ENCODE measurements at regions of chr6 and their contacts with region 1.

Region 1: GRCh38 chr6:25278914-25279747 is at the start of gene CARMIL1:
- DNase-seq: peak; percentile 80
- ATAC-seq: peak; percentile 90
- H3K4me3 Mint-ChIP-seq: peak within 1 kb of the TSS; percentile 76
- H3K27ac Mint-ChIP-seq: peak within 1 kb of the TSS; percentile 62
- H3K4me1 Mint-ChIP-seq: peaks cover 20% of the 10 kb centered on the region
- H3K27me3 Mint-ChIP-seq: peaks cover 18% of the 10 kb centered on the region
- total RNA-seq, gene CARMIL1: 3.4 to 3.8 TPM

Region 2: DNA sequence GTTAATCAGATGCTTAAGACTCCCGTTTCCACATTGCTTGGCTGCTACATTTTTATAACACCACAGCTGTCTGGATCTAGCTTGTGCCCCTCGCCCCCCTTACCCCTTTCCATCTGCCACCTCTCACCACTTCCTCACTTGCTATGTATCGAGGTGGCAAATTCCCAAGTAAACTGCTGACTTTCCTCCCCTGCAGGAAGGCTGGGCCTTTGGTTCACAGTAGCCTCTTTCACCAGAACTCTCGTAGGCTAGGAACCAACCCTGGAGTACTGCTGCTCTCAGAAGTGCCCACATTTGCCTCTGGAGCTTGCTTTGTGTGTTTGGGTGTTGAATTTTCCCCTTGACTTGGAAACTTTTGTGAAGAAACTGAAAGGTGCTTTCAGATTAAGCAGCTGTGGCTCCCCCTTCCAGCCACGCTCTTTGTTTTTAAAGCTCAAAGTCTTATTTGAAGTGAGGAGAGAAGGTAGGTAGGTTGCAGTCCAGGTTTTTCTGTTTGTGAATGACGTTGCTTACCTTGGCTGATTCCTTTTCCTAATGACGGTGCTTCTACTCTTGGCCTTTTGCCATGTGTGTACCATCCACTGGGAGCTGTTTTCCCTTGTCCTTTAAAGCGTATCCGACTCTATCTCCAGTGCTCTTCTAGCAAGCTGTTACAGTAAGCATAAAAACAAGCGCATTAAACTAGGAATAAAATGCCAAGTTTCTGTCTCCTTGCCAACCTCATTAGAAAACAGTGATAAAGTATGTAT is 90.5 kb after region 1 on chr6:
- CTCF ChIA-PET with region 1: interaction called, 14 read pairs
- DNase-seq: no peak
- ATAC-seq: peak; percentile 9
- H3K4me3 Mint-ChIP-seq: peak overlapping the region; percentile 41
- H3K27ac Mint-ChIP-seq: peak overlapping the region; percentile 76
- H3K4me1 Mint-ChIP-seq: peaks cover 69% of the 10 kb centered on the region
- H3K27me3 Mint-ChIP-seq: no peaks in the 10 kb centered on the region

Region 3: DNA sequence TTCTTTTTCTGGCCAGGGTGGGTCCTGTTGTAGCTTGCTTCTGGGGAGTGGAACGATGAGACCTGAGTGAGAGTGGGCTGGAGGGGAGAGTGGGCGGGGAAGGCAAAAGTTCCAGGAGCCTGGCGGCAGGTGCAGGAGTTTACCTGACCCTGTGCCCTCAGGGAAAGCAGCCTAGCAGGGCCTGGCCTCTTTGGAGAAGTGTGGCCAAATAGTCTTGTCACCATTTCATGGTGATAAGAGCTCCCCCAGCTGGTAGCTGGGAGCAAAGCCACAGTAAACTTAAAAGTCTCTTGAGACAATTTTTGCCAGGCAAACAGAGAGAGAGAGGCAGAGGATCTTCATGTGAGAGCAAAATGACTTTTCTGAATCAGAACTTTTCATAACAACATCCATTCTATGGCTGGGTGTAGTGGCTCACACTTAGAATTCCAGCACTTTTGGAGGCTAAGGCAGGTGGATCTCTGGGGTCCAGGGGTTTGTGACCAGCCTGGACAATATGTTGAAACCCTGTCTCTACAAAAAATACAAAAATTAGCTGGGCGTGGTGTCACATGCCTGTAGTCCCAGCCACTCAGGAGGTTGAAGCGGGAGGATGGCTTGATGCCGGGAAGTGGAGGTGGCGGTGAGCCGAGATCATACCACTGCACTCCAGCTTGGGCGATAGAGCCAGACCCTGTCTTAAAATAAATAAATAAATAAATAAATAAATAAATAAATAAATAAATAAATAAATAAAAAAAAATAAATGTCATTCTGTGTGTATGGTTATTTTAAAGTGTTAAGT is 211.1 kb after region 1 on chr6:
- CTCF ChIA-PET with region 1: interaction called, 104 read pairs
- DNase-seq: peak; percentile 79
- ATAC-seq: peak; percentile 79
- H3K4me3 Mint-ChIP-seq: no peak overlapping the region
- H3K27ac Mint-ChIP-seq: no peak overlapping the region
- H3K4me1 Mint-ChIP-seq: peaks cover 4% of the 10 kb centered on the region
- H3K27me3 Mint-ChIP-seq: no peaks in the 10 kb centered on the region

Region 4: GRCh38 chr6:25511376-25511775 is 232.2 kb after region 1 on chr6:
- CTCF ChIA-PET with region 1: interaction called, 10 read pairs
- DNase-seq: no peak
- ATAC-seq: no peak
- H3K4me3 Mint-ChIP-seq: no peak overlapping the region
- H3K27ac Mint-ChIP-seq: no peak overlapping the region
- H3K4me1 Mint-ChIP-seq: no peaks in the 10 kb centered on the region
- H3K27me3 Mint-ChIP-seq: no peaks in the 10 kb centered on the region

Region 5: GRCh38 chr6:25556516-25556915 is 277.4 kb after region 1 on chr6:
- CTCF ChIA-PET with region 1: interaction called, 37 read pairs
- DNase-seq: peak; percentile 86
- ATAC-seq: peak; percentile 64
- H3K4me3 Mint-ChIP-seq: no peak overlapping the region
- H3K27ac Mint-ChIP-seq: no peak overlapping the region
- H3K4me1 Mint-ChIP-seq: peaks cover 2% of the 10 kb centered on the region
- H3K27me3 Mint-ChIP-seq: no peaks in the 10 kb centered on the region